AG04450 (cell line): ENCODE measurements at regions of chr11 and their contacts with region 1.

Region 1: DNA sequence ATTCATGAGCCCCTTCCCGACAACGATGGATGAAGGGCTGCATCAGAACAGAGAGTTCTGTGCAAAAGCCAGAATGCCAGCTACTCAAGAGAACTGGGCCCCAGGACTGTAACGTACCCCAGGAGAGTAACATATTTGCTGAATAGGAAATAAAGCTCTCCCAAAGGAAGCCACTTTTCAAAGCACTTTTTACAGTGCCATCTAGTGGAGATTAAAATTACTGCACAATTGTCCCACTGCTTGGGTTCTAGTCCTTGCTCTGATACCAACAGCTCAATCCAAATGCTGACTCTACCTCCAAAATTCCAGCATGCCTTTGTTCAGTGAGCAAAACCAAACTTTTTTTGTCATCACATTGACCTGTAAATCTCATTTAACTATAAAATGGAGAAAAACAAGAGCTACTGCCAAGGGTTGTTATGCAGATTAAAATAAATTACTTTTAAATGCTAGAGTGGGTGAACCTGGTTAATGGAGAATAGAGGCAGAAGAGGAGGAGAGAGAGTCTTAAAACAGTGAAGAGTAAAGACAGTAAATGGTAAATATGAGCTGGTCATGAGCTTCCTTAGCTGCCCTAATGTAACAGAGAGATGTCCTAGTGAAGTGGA is 87.6 kb upstream of the FSHB start:
- DNase-seq: peak; percentile 4
- H3K4me3 ChIP-seq: no peak overlapping the region
- H3K27ac ChIP-seq: no peak overlapping the region
- H3K27me3 ChIP-seq: no peaks in the 10 kb centered on the region
- CTCF ChIP-seq: peak; percentile 75

Region 2: GRCh38 chr11:29432719-29433325 is 710.4 kb before region 1 on chr11:
- CTCF ChIA-PET with region 1: interaction called, 75 read pairs
- POLR2A ChIA-PET with region 1: no interaction called
- DNase-seq: no peak
- H3K4me3 ChIP-seq: no peak overlapping the region
- H3K27ac ChIP-seq: no peak overlapping the region
- H3K27me3 ChIP-seq: no peaks in the 10 kb centered on the region
- CTCF ChIP-seq: peak; percentile 57

Region 3: GRCh38 chr11:29448246-29448877 is 694.8 kb before region 1 on chr11:
- CTCF ChIA-PET with region 1: interaction called, 42 read pairs
- POLR2A ChIA-PET with region 1: no interaction called
- DNase-seq: no peak
- H3K4me3 ChIP-seq: no peak overlapping the region
- H3K27ac ChIP-seq: no peak overlapping the region
- H3K27me3 ChIP-seq: no peaks in the 10 kb centered on the region
- CTCF ChIP-seq: peak; percentile 61

Region 4: GRCh38 chr11:30128269-30128932 is 14.8 kb before region 1 on chr11:
- CTCF ChIA-PET with region 1: interaction called, 73 read pairs
- POLR2A ChIA-PET with region 1: no interaction called
- DNase-seq: peak; percentile 8
- H3K4me3 ChIP-seq: no peak overlapping the region
- H3K27ac ChIP-seq: no peak overlapping the region
- H3K27me3 ChIP-seq: no peaks in the 10 kb centered on the region
- CTCF ChIP-seq: peak; percentile 66

Region 5: DNA sequence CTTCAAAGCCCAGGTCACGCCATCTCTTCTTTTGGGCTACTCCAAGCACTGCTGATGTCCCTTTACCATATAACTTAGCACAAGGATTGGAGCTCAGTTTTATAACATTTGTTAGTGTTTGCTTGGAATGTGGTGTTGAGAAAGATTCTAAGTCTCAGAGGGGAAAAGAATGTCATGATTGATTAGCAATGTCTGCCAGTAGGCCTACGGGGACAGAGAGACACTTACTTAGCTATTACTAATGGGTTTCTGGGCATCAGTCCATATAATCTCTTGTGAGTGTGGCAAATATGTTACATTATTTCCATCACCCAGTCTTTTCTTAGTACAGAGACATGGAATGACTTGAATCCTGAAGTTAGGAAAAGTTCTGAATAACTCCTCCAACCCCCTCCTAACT is 12.2 kb after region 1 on chr11:
- CTCF ChIA-PET with region 1: interaction called, 53 read pairs
- POLR2A ChIA-PET with region 1: no interaction called
- DNase-seq: no peak
- H3K4me3 ChIP-seq: no peak overlapping the region
- H3K27ac ChIP-seq: no peak overlapping the region
- H3K27me3 ChIP-seq: no peaks in the 10 kb centered on the region
- CTCF ChIP-seq: no peak

Region 6: GRCh38 chr11:30165652-30166051 is 22.4 kb after region 1 on chr11:
- CTCF ChIA-PET with region 1: interaction called, 16 read pairs
- POLR2A ChIA-PET with region 1: no interaction called
- DNase-seq: no peak
- H3K4me3 ChIP-seq: no peak overlapping the region
- H3K27ac ChIP-seq: no peak overlapping the region
- H3K27me3 ChIP-seq: no peaks in the 10 kb centered on the region
- CTCF ChIP-seq: no peak

Region 7: DNA sequence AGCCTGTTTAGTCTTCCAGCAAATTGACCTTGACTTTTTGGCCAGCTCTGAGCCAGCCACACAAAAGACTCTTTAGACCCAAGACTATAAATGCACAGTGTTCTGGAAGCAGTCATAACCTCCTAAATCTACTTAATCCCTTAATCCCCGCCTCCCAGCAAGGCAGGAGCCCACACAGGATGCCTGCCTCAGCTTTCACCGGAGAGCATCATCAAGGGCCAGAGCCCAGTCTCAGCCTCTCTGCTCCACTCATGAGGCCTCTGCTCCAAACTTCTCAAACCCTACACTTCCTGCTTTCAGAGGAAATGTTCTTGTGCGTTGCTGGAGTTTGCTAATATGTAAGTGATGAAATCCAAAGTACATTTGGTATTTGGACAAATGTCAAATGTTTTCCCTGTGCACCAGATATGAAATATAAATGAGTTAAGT is 29.7 kb after region 1 on chr11:
- CTCF ChIA-PET with region 1: interaction called, 13 read pairs
- POLR2A ChIA-PET with region 1: no interaction called
- DNase-seq: no peak
- H3K4me3 ChIP-seq: no peak overlapping the region
- H3K27ac ChIP-seq: no peak overlapping the region
- H3K27me3 ChIP-seq: no peaks in the 10 kb centered on the region
- CTCF ChIP-seq: no peak

Region 8: GRCh38 chr11:30314625-30315024 is 171.4 kb after region 1 on chr11:
- CTCF ChIA-PET with region 1: no interaction called
- POLR2A ChIA-PET with region 1: no interaction called
- DNase-seq: no peak
- H3K4me3 ChIP-seq: no peak overlapping the region
- H3K27ac ChIP-seq: no peak overlapping the region
- H3K27me3 ChIP-seq: no peaks in the 10 kb centered on the region
- CTCF ChIP-seq: peak; percentile 59